ENCODE measurements at regions of chr12 and their contacts with region 1.

Region 1: GRCh38 chr12:66169221-66170170 is at the start of gene TMBIM4:
- DNase-seq: peak; percentile 94
- H3K4me3 ChIP-seq: peak within 1 kb of the TSS; percentile 69 to 92 (median 78)
- H3K27ac ChIP-seq: peak within 1 kb of the TSS; percentile 96 to 99 (median 98)
- H3K4me1 ChIP-seq: peaks cover 0 to 21% (median 15%) of the 10 kb centered on the region in 4 donors
- H3K27me3 ChIP-seq: no peaks in the 10 kb centered on the region
- CTCF ChIP-seq: peak; percentile 60 to 63 (median 62)
- EP300 ChIP-seq: no peak
- POLR2A ChIP-seq: peak; percentile 30 to 61
- total RNA-seq, gene TMBIM4: 142 to 200 (median 160) TPM

Region 2: DNA sequence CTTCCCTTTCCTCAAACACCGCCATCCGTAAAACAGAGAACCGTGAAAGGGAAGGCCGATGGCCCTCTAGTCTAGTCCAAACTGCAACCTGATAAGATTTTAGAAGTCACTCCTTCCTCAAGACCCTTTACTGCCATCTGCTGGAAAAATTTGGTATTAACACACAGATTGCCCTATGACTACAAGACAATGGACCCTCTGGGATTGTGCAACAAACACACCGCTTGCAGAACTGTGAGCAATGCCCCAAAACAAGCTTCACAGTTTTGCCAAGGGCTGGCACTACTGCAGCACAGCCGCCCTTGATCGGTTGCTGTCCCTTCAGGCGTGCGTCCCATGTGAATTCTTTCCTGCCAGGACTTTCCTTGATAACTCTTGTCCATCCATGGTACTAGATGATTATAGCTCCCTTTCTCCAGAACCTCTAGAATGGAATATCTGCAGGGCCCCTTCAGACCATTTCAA is 62.0 kb before region 1 on chr12:
- intact Hi-C with region 1: no loop called
- DNase-seq: peak; percentile 65
- H3K4me3 ChIP-seq: no peak overlapping the region
- H3K27ac ChIP-seq: no peak overlapping the region
- H3K4me1 ChIP-seq: no peaks in the 10 kb centered on the region
- H3K27me3 ChIP-seq: no peaks in the 10 kb centered on the region
- CTCF ChIP-seq: peak; percentile 54 to 83 (median 61)
- EP300 ChIP-seq: no peak
- POLR2A ChIP-seq: no peak

Region 3: DNA sequence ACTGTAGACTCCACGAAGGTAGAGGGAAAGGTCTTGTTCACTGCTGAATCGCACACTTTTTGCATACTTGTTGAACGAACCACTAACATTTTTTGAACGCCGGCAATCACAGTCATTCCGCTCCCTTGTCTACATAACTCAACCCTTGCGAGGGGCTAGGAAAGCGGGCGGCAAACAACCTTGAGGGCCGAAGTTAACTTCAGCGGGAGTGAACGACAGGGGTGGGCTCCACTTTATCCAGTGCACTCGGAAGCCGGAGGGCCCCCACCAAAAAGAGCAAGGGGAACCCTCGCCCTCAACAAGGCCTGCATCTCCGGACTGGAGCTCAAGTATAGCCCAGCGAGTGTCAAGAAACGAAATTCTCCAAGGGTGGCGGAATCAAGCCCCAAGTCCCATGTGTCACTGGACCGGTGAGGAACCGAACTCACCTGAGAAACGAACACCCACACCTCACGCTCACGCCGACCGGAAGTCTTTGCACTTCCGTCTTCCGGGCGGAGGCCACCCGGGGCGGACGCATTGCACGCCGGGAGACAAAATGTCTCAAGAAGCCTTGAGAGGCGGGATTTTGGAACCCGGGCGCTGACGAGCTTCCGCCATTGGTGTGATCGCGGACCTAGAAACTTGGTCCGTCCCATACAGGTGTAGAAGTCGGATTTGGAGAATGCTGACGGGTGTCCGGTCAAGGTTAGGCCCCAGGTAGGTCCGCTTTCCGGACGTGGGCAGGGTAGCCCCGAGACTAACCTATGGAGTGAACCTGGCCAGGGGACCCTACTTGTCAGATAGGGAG is 39.0 kb before region 1 on chr12 and contains the start of gene LLPH:
- intact Hi-C with region 1: loop called (anchors 2 kb)
- DNase-seq: peak; percentile 93
- H3K4me3 ChIP-seq: peak within 1 kb of the TSS; percentile 82 to 88 (median 88)
- H3K27ac ChIP-seq: peak within 1 kb of the TSS; percentile 41 to 73 (median 68)
- H3K4me1 ChIP-seq: peaks cover 0 to 25% (median 15%) of the 10 kb centered on the region in 4 donors
- H3K27me3 ChIP-seq: no peaks in the 10 kb centered on the region
- CTCF ChIP-seq: no peak
- EP300 ChIP-seq: no peak
- POLR2A ChIP-seq: peak; percentile 59 to 61
- total RNA-seq, gene LLPH: 5.0 to 10.3 (median 6.7) TPM

Region 4: GRCh38 chr12:66149702-66150398 is 19.6 kb before region 1 on chr12:
- intact Hi-C with region 1: no loop called
- DNase-seq: no peak
- H3K4me3 ChIP-seq: no peak overlapping the region
- H3K27ac ChIP-seq: no peak overlapping the region
- H3K4me1 ChIP-seq: peaks cover 0 to 31% (median 11%) of the 10 kb centered on the region in 4 donors
- H3K27me3 ChIP-seq: no peaks in the 10 kb centered on the region
- CTCF ChIP-seq: no peak
- EP300 ChIP-seq: no peak
- POLR2A ChIP-seq: no peak

Region 5: DNA sequence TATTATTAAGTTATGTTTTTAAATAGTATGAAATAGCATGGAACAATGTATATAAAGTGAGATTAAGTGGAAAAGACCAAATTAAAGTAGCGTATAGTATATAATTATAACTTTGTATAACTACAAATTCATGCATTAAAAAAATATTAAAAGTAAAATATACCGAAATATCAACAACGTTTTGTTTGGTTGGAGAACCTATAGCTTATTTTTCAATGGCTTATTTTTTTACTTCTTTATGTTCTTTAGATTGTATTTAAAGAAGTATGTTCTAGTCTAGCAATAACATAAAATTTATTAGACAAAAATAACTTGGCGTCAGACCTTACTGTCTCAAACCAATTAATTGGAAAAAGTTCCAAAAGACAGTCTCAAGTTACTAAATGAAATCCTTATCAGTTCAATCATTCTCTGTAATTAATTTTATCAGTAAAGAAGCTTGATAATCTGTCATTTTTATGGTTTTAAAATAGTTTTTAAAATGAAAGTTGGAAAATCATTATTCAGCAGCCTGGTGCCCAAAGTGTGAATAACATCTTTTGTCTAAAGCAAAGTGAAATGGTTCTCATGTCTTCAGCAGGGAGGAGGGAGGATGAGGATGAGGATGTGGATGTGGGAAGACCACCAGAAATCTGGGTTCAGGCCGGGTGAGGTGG is 66.3 kb after region 1 on chr12:
- intact Hi-C with region 1: loop called (anchors 2 kb)
- DNase-seq: no peak
- H3K4me3 ChIP-seq: peak overlapping the region; percentile 32 to 55 (median 52)
- H3K27ac ChIP-seq: peak overlapping the region in 3 of 4 donors; percentile 55 to 68 (median 66)
- H3K4me1 ChIP-seq: peaks cover 0 to 4% (median 0%) of the 10 kb centered on the region in 4 donors
- H3K27me3 ChIP-seq: peaks cover 0 to 4% (median 0%) of the 10 kb centered on the region in 3 donors
- CTCF ChIP-seq: no peak
- EP300 ChIP-seq: no peak
- POLR2A ChIP-seq: no peak

Region 6: GRCh38 chr12:66301944-66302826 is 132.7 kb after region 1 on chr12 and contains the start of gene HELB:
- intact Hi-C with region 1: loop called (anchors 1 kb)
- DNase-seq: peak; percentile 99
- H3K4me3 ChIP-seq: peak within 1 kb of the TSS; percentile 51 to 75 (median 62)
- H3K27ac ChIP-seq: peak within 1 kb of the TSS; percentile 81 to 82 (median 82)
- H3K4me1 ChIP-seq: peaks cover 0 to 19% (median 10%) of the 10 kb centered on the region in 4 donors
- H3K27me3 ChIP-seq: no peaks in the 10 kb centered on the region
- CTCF ChIP-seq: no peak
- EP300 ChIP-seq: peak in 1 of 4 donors; percentile 12
- POLR2A ChIP-seq: peak in 1 of 2 donors; percentile 45
- total RNA-seq, gene HELB: 3.2 to 8.6 (median 4.4) TPM

Region 7: GRCh38 chr12:67245571-67245970 is 1076.1 kb after region 1 on chr12:
- intact Hi-C with region 1: no loop called
- DNase-seq: no peak
- H3K4me3 ChIP-seq: no peak overlapping the region
- H3K27ac ChIP-seq: no peak overlapping the region
- H3K4me1 ChIP-seq: no peaks in the 10 kb centered on the region
- H3K27me3 ChIP-seq: no peaks in the 10 kb centered on the region
- CTCF ChIP-seq: no peak
- EP300 ChIP-seq: no peak
- POLR2A ChIP-seq: no peak

Measured in sigmoid colon (tissue), 7 donors.